PC-3 (cell line): ENCODE measurements at regions of chr5 and their contacts with region 1.

Region 1: GRCh38 chr5:172740428-172741201 is 30.4 kb downstream of the DUSP1 start:
- DNase-seq: peak; percentile 66
- ATAC-seq: peak; percentile 93
- H3K4me3 ChIP-seq: no peak overlapping the region
- H3K27ac ChIP-seq: 0 out of 2 replicates have a peak overlapping the region, but pooled peaks have one; percentile 12
- H3K4me1 ChIP-seq: peaks cover 9% of the 10 kb centered on the region
- H3K27me3 ChIP-seq: no peaks in the 10 kb centered on the region
- CTCF ChIP-seq: no peak

Region 2: GRCh38 chr5:172594867-172595466 is 145.6 kb before region 1 on chr5:
- CTCF ChIA-PET with region 1: no interaction called
- POLR2A ChIA-PET with region 1: no interaction called
- intact Hi-C with region 1: no loop called
- DNase-seq: no peak
- ATAC-seq: no peak
- H3K4me3 ChIP-seq: no peak overlapping the region
- H3K27ac ChIP-seq: no peak overlapping the region
- H3K4me1 ChIP-seq: no peaks in the 10 kb centered on the region
- H3K27me3 ChIP-seq: peaks cover 24% of the 10 kb centered on the region
- CTCF ChIP-seq: no peak

Region 3: GRCh38 chr5:172751766-172752510 is 11.3 kb after region 1 on chr5:
- CTCF ChIA-PET with region 1: no interaction called
- POLR2A ChIA-PET with region 1: no interaction called
- intact Hi-C with region 1: loop called (anchors 1 kb)
- DNase-seq: no peak
- ATAC-seq: no peak
- H3K4me3 ChIP-seq: no peak overlapping the region
- H3K27ac ChIP-seq: no peak overlapping the region
- H3K4me1 ChIP-seq: no peaks in the 10 kb centered on the region
- H3K27me3 ChIP-seq: no peaks in the 10 kb centered on the region
- CTCF ChIP-seq: no peak

Region 4: GRCh38 chr5:172816901-172817564 is 76.4 kb after region 1 on chr5:
- CTCF ChIA-PET with region 1: no interaction called
- POLR2A ChIA-PET with region 1: no interaction called
- intact Hi-C with region 1: no loop called
- DNase-seq: peak; percentile 59
- ATAC-seq: peak; percentile 64
- H3K4me3 ChIP-seq: no peak overlapping the region
- H3K27ac ChIP-seq: peak overlapping the region; percentile 19; the same call in 1 of the 2 replicates
- H3K4me1 ChIP-seq: peaks cover 24% of the 10 kb centered on the region
- H3K27me3 ChIP-seq: no peaks in the 10 kb centered on the region
- CTCF ChIP-seq: no peak